ENCODE measurements at regions of chr10 and their contacts with region 1.

Region 1: GRCh38 chr10:104353325-104354048 is at the start of gene CFAP58:
- DNase-seq: no peak
- H3K4me3 ChIP-seq: peak within 1 kb of the TSS; percentile 68
- H3K27ac ChIP-seq: no peak within 1 kb of the TSS
- H3K27me3 ChIP-seq: no peaks in the 10 kb centered on the region
- CTCF ChIP-seq: peak; percentile 66
- polyA plus RNA-seq, gene CFAP58: 0.35 and 0.51 TPM in 2 replicates

Region 2: GRCh38 chr10:104281694-104282093 is 71.8 kb before region 1 on chr10:
- CTCF ChIA-PET with region 1: interaction called, 143 read pairs
- POLR2A ChIA-PET with region 1: no interaction called
- DNase-seq: no peak
- H3K4me3 ChIP-seq: no peak overlapping the region
- H3K27ac ChIP-seq: no peak overlapping the region
- H3K27me3 ChIP-seq: peaks cover 2% of the 10 kb centered on the region
- CTCF ChIP-seq: no peak

Region 3: GRCh38 chr10:104300736-104301292 is 52.7 kb before region 1 on chr10:
- CTCF ChIA-PET with region 1: interaction called, 379 read pairs
- POLR2A ChIA-PET with region 1: no interaction called
- DNase-seq: peak; percentile 93
- H3K4me3 ChIP-seq: peak overlapping the region; percentile 48
- H3K27ac ChIP-seq: peak overlapping the region; percentile 100
- H3K27me3 ChIP-seq: no peaks in the 10 kb centered on the region
- CTCF ChIP-seq: no peak

Region 4: GRCh38 chr10:104308439-104308903 is 45.0 kb before region 1 on chr10:
- CTCF ChIA-PET with region 1: interaction called, 53 read pairs
- POLR2A ChIA-PET with region 1: interaction called, 3 read pairs
- DNase-seq: no peak
- H3K4me3 ChIP-seq: no peak overlapping the region
- H3K27ac ChIP-seq: no peak overlapping the region
- H3K27me3 ChIP-seq: no peaks in the 10 kb centered on the region
- CTCF ChIP-seq: no peak

Region 5: GRCh38 chr10:104337974-104338735 is 15.3 kb before region 1 on chr10 and contains the start of gene ITPRIP:
- CTCF ChIA-PET with region 1: interaction called, 16 read pairs
- POLR2A ChIA-PET with region 1: interaction called, 3 read pairs
- DNase-seq: no peak
- H3K4me3 ChIP-seq: peak within 1 kb of the TSS; percentile 87
- H3K27ac ChIP-seq: peak within 1 kb of the TSS; percentile 99
- H3K27me3 ChIP-seq: no peaks in the 10 kb centered on the region
- CTCF ChIP-seq: peak; percentile 36
- polyA plus RNA-seq, gene ITPRIP: 18.8 and 22.9 TPM in 2 replicates

Region 6: GRCh38 chr10:104368381-104368780 is 14.9 kb after region 1 on chr10:
- CTCF ChIA-PET with region 1: interaction called, 11 read pairs
- POLR2A ChIA-PET with region 1: no interaction called
- DNase-seq: no peak
- H3K4me3 ChIP-seq: no peak overlapping the region
- H3K27ac ChIP-seq: no peak overlapping the region
- H3K27me3 ChIP-seq: peaks cover 3% of the 10 kb centered on the region
- CTCF ChIP-seq: no peak